AG04450 (cell line): ENCODE measurements at regions of chr6 and their contacts with region 1.

Region 1: GRCh38 chr6:142642651-142643050 is 302.3 kb downstream of the HIVEP2 start:
- DNase-seq: no peak
- H3K4me3 ChIP-seq: no peak overlapping the region
- H3K27ac ChIP-seq: no peak overlapping the region
- H3K27me3 ChIP-seq: peaks cover 12% of the 10 kb centered on the region
- CTCF ChIP-seq: no peak

Region 2: GRCh38 chr6:142551274-142551811 is 91.3 kb before region 1 on chr6:
- CTCF ChIA-PET with region 1: no interaction called
- POLR2A ChIA-PET with region 1: no interaction called
- DNase-seq: no peak
- H3K4me3 ChIP-seq: no peak overlapping the region
- H3K27ac ChIP-seq: no peak overlapping the region
- H3K27me3 ChIP-seq: peaks cover 5% of the 10 kb centered on the region
- CTCF ChIP-seq: no peak

Region 3: DNA sequence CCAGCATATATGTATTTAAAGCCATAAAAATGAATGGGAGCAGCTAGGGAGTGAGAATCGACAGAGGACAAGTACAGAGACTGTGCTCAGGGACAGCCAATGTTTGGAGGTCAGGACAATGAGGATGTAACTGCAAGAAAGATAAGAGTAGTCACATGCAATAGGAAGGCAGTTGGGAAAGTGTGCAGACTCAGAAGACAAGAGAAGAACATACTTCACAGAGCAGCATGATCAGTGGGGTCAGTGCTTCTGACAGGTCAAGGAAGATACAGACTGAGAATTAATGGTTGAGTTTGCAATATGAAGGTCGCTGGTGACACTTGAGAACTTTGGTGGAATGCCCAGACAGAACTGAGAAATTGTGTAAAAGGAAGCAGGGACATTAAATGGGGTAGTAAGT is 1340.3 kb after region 1 on chr6:
- CTCF ChIA-PET with region 1: interaction called, 10 read pairs
- POLR2A ChIA-PET with region 1: no interaction called
- DNase-seq: no peak
- H3K4me3 ChIP-seq: no peak overlapping the region
- H3K27ac ChIP-seq: no peak overlapping the region
- H3K27me3 ChIP-seq: no peaks in the 10 kb centered on the region
- CTCF ChIP-seq: no peak